HepG2 (cell line): ENCODE measurements at regions of chr3 and their contacts with region 1.

Region 1: DNA sequence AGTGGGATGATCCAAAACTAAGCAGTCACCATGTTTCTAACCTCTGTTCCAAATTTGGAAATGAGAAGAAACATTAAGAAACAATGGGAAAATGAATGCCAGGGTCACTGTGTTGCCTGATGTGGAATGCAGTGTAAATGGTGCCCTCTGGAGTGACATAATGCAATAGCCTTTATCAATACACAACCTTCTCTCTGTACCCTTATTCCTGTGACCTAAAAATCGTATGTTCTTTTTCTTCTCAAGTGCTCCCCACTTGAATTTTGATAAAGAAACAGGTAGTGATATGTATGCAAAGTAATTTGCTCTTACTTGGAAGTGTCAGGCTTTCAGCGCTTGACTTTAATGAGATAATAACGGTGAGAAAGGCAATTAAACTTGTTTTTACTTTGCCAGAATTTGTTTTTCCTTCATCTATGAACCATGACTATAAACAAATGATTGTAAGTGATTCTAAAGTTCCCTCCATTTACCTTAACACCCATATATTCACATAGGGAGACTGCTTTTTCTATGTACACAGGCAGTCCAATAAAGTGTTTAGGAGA is 145.8 kb upstream of the THRB start:
- DNase-seq: peak; percentile 15
- ATAC-seq: peak; percentile 94
- H3K4me3 ChIP-seq: no peak overlapping the region
- H3K27ac ChIP-seq: no peak overlapping the region
- H3K4me1 ChIP-seq: no peaks in the 10 kb centered on the region
- H3K27me3 ChIP-seq: no peaks in the 10 kb centered on the region
- CTCF ChIP-seq: peak; percentile 79
- EP300 ChIP-seq: no peak
- POLR2A ChIP-seq: no peak
- RAD21 ChIP-seq: peak; percentile 68; the same call in 1 of the 2 replicates

Region 2: GRCh38 chr3:23999012-23999641 is 641.3 kb before region 1 on chr3:
- CTCF ChIA-PET with region 1: interaction called, 7 read pairs
- POLR2A ChIA-PET with region 1: no interaction called
- in situ Hi-C with region 1: no loop called
- intact Hi-C with region 1: loop called (anchors 2 kb)
- DNase-seq: peak; percentile 45
- ATAC-seq: peak; percentile 53; the same call in 2 of the 3 replicates
- H3K4me3 ChIP-seq: no peak overlapping the region
- H3K27ac ChIP-seq: no peak overlapping the region
- H3K4me1 ChIP-seq: no peaks in the 10 kb centered on the region
- H3K27me3 ChIP-seq: peaks cover 0 to 18% of the 10 kb centered on the region in 2 experiments; a peak in 2 of 5 replicates
- CTCF ChIP-seq: peak; percentile 89
- EP300 ChIP-seq: no peak; a peak in 1 of 4 replicates
- POLR2A ChIP-seq: no peak
- RAD21 ChIP-seq: peak; percentile 84

Region 3: GRCh38 chr3:24069045-24069444 is 571.4 kb before region 1 on chr3:
- CTCF ChIA-PET with region 1: interaction called, 6 read pairs
- POLR2A ChIA-PET with region 1: no interaction called
- in situ Hi-C with region 1: no loop called
- intact Hi-C with region 1: loop called (anchors 2 kb)
- DNase-seq: peak; percentile 5
- ATAC-seq: no peak; the same call in 2 of the 3 replicates
- H3K4me3 ChIP-seq: no peak overlapping the region
- H3K27ac ChIP-seq: no peak overlapping the region
- H3K4me1 ChIP-seq: no peaks in the 10 kb centered on the region
- H3K27me3 ChIP-seq: no peaks in the 10 kb centered on the region; a peak in 2 of 5 replicates
- CTCF ChIP-seq: peak; percentile 58
- EP300 ChIP-seq: no peak
- POLR2A ChIP-seq: no peak
- RAD21 ChIP-seq: 0 out of 2 replicates have a peak, but pooled peaks have one; percentile 32

Region 4: DNA sequence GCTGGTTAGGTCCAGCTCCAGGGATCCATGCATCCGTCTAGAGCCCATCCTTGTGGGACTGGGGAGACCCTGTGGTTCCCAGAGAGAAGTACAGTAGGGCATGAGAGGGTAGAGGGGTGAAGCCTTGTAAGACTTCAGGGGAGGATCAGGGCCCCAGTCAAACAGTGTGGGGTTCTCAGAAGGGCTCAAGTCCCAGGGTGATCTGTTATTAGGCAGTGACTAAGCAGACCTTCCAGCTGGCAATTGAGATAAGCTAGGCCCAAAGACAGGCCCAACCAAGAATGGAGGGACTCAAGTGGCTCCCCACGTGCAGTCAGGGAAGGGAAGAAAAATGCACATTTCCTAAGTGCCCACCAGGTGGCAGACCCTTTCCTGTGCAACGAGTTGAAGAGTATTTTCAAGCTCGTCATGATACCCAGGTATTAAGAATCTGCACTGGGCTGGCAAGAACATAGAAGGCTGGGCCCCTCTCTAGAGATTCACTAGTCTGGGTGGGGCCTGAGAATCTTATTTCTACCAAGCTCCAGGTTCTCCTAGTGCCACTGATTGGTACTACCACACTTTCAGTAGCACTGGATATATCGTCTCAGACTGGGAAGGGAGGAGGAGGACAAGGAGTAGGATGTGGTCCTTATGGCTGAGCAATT is 454.5 kb before region 1 on chr3:
- CTCF ChIA-PET with region 1: interaction called, 8 read pairs
- POLR2A ChIA-PET with region 1: no interaction called
- in situ Hi-C with region 1: no loop called
- intact Hi-C with region 1: loop called (anchors 1 kb)
- DNase-seq: peak; percentile 26
- ATAC-seq: peak; percentile 88
- H3K4me3 ChIP-seq: no peak overlapping the region
- H3K27ac ChIP-seq: no peak overlapping the region
- H3K4me1 ChIP-seq: no peaks in the 10 kb centered on the region
- H3K27me3 ChIP-seq: no peaks in the 10 kb centered on the region
- CTCF ChIP-seq: peak; percentile 73
- EP300 ChIP-seq: no peak
- POLR2A ChIP-seq: no peak
- RAD21 ChIP-seq: 0 out of 2 replicates have a peak, but pooled peaks have one; percentile 39

Region 5: GRCh38 chr3:24264748-24265158 is 375.7 kb before region 1 on chr3:
- CTCF ChIA-PET with region 1: interaction called, 7 read pairs
- POLR2A ChIA-PET with region 1: no interaction called
- in situ Hi-C with region 1: loop called (anchors 25 kb)
- intact Hi-C with region 1: loop called (anchors 1 kb)
- DNase-seq: peak; percentile 53
- ATAC-seq: peak; percentile 73
- H3K4me3 ChIP-seq: no peak overlapping the region
- H3K27ac ChIP-seq: no peak overlapping the region
- H3K4me1 ChIP-seq: peaks cover 5% of the 10 kb centered on the region; the same call in 1 of the 2 replicates
- H3K27me3 ChIP-seq: no peaks in the 10 kb centered on the region
- CTCF ChIP-seq: peak; percentile 75
- EP300 ChIP-seq: no peak
- POLR2A ChIP-seq: no peak
- RAD21 ChIP-seq: peak; percentile 83

Region 6: GRCh38 chr3:24521420-24522145 is 118.8 kb before region 1 on chr3:
- CTCF ChIA-PET with region 1: no interaction called
- POLR2A ChIA-PET with region 1: no interaction called
- in situ Hi-C with region 1: no loop called
- intact Hi-C with region 1: loop called (anchors 10 kb)
- DNase-seq: peak; percentile 36
- ATAC-seq: peak; percentile 72
- H3K4me3 ChIP-seq: peak overlapping the region; percentile 82 to 93 (median 85)
- H3K27ac ChIP-seq: peak overlapping the region; percentile 92
- H3K4me1 ChIP-seq: peaks cover 65% of the 10 kb centered on the region
- H3K27me3 ChIP-seq: no peaks in the 10 kb centered on the region; a peak in 1 of 5 replicates
- CTCF ChIP-seq: peak; percentile 34
- EP300 ChIP-seq: no peak
- POLR2A ChIP-seq: peak in 1 of 2 experiments; percentile 30
- RAD21 ChIP-seq: peak; percentile 62